IMR-90 (cell line): ENCODE measurements at regions of chr16 and their contacts with region 1.

Region 1: DNA sequence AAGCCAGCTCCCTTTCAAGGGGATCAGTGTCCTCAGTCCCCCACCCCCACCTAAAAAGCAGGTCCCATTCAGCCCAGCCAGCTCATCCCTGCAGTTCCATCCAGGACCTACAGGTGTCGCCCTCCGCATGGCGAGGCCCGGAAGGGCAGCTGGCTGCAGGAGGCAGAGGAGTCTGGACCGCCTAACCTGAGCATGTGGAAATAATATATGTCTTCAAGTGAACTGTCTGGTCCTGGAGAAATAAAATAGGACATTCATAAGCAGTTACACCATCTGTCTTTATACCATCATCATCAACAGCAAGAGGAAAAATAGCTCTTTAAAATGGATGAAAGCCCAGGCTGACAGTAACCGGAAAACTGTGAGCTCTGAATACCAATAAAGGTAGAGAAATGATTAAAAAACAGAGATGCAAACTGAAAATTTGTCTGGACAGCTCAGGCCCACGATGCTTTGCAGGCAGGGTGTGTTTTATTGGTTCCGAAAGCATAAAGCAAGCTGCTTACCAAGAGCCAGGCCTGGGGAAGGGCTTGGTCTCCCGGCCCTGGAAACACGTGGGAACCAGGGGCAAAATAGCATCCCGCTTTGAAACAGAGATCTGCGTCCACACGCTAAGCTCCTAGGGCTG is 215.2 kb downstream of the ZFHX3 start:
- DNase-seq: peak; percentile 70
- ATAC-seq: peak; percentile 97
- H3K4me3 ChIP-seq: no peak overlapping the region
- H3K27ac ChIP-seq: no peak overlapping the region
- H3K4me1 ChIP-seq: peaks cover 4% of the 10 kb centered on the region
- H3K27me3 ChIP-seq: no peaks in the 10 kb centered on the region
- CTCF ChIP-seq: peak; percentile 96
- POLR2A ChIP-seq: no peak
- RAD21 ChIP-seq: peak; percentile 96

Region 2: GRCh38 chr16:72612256-72612655 is 220.5 kb before region 1 on chr16:
- CTCF ChIA-PET with region 1: no interaction called
- POLR2A ChIA-PET with region 1: no interaction called
- dilution Hi-C with region 1: no loop called
- in situ Hi-C with region 1: no loop called
- intact Hi-C with region 1: no loop called
- DNase-seq: peak; percentile 21
- ATAC-seq: peak; percentile 61
- H3K4me3 ChIP-seq: no peak overlapping the region
- H3K27ac ChIP-seq: no peak overlapping the region
- H3K4me1 ChIP-seq: no peaks in the 10 kb centered on the region
- H3K27me3 ChIP-seq: no peaks in the 10 kb centered on the region
- CTCF ChIP-seq: no peak
- POLR2A ChIP-seq: no peak
- RAD21 ChIP-seq: no peak

Region 3: DNA sequence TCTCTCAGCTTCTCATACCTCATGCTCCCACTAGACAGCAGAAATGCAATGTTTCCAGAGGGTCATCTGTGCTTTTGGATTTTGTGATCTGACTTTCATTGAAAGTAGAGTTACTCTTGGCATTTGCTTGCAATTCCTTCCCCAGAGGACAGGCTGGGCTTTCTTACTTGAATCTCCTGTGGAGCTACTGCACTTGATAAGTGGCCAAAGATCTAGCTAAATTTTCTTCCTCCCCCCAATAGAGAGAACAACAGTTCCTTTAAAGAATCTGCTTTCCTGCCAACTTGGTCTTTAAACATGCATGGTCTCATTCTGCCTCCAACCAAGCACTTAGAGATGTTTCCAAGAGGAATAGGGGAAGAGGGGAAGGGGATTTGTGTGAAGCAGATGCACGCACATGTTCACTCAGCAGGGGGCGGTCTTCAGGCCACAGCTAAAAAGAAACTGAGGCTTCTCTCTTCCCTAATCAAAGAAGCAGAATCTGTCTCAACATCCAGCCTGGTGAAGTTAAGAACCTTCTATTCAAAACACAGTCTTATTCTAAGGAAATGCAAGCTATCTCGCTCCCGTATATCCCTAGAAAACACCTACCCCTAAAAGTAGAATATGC is 14.4 kb before region 1 on chr16:
- CTCF ChIA-PET with region 1: interaction called, 12 read pairs
- POLR2A ChIA-PET with region 1: no interaction called
- dilution Hi-C with region 1: no loop called
- in situ Hi-C with region 1: no loop called
- intact Hi-C with region 1: no loop called
- DNase-seq: no peak
- ATAC-seq: no peak
- H3K4me3 ChIP-seq: no peak overlapping the region
- H3K27ac ChIP-seq: no peak overlapping the region
- H3K4me1 ChIP-seq: peaks cover 10% of the 10 kb centered on the region
- H3K27me3 ChIP-seq: no peaks in the 10 kb centered on the region
- CTCF ChIP-seq: 0 out of 2 replicates have a peak, but pooled peaks have one; percentile 11
- POLR2A ChIP-seq: no peak
- RAD21 ChIP-seq: no peak

Region 4: DNA sequence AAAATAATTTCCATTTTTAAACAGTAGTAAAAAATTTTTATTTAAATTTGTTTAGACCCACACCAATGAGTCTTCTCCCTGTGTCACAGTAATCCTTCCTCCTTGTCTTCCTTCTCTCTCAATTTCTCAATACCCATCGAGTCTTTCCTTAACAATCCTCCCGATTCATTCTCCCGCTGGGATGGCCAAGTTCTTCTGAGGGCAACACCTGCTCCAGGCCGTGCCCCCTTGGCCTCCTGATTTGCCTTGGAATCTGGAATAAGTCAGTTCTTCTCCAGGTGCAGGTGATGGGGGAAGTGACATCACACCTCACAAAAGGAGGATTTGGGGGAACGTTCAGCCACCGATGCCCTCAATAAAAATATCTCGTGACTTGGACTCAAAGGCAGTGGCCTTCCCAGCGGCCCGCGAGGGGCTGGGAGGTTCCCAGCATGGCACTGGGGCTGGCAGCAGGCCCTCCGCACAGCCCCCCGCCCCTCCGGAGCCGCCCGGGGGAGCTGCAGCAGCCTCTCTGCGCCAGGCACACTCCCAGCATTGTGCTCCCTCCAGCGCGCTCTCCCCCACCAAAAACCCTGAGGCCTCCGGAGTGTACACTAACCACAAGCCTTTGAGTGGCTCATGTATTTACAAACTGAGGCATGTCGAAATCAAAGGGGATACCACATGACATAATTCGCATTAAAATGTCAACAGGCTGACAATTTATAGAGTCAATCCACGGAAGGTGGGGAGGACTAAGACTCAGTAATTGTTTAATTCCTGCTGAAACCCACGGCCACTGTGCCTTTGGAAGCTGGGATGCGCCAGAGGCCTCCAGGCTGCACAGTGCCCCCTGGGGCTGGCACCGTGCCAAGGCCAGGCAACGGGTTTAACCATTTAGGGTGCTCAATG is 94.7 kb after region 1 on chr16:
- CTCF ChIA-PET with region 1: interaction called, 6 read pairs
- POLR2A ChIA-PET with region 1: no interaction called
- dilution Hi-C with region 1: no loop called
- in situ Hi-C with region 1: no loop called
- intact Hi-C with region 1: loop called (anchors 5 kb)
- DNase-seq: peak; percentile 97
- ATAC-seq: peak; percentile 87
- H3K4me3 ChIP-seq: no peak overlapping the region
- H3K27ac ChIP-seq: no peak overlapping the region
- H3K4me1 ChIP-seq: peaks cover 14% of the 10 kb centered on the region
- H3K27me3 ChIP-seq: peaks cover 4% of the 10 kb centered on the region; the same call in 1 of the 2 replicates
- CTCF ChIP-seq: no peak; the same call in 1 of the 2 replicates
- POLR2A ChIP-seq: no peak
- RAD21 ChIP-seq: peak; percentile 28; the same call in 1 of the 2 replicates

Region 5: GRCh38 chr16:73172241-73172972 is 339.7 kb after region 1 on chr16:
- CTCF ChIA-PET with region 1: interaction called, 4 read pairs
- POLR2A ChIA-PET with region 1: no interaction called
- dilution Hi-C with region 1: no loop called
- in situ Hi-C with region 1: no loop called
- intact Hi-C with region 1: loop called (anchors 2 kb)
- DNase-seq: peak; percentile 91
- ATAC-seq: peak; percentile 78
- H3K4me3 ChIP-seq: no peak overlapping the region
- H3K27ac ChIP-seq: peak overlapping the region; percentile 68; the same call in 1 of the 2 replicates
- H3K4me1 ChIP-seq: peaks cover 16% of the 10 kb centered on the region
- H3K27me3 ChIP-seq: 0 out of 2 replicates have a peak, but pooled peaks cover 3% of the 10 kb centered on the region
- CTCF ChIP-seq: peak; percentile 36
- POLR2A ChIP-seq: no peak
- RAD21 ChIP-seq: peak; percentile 36

Region 6: DNA sequence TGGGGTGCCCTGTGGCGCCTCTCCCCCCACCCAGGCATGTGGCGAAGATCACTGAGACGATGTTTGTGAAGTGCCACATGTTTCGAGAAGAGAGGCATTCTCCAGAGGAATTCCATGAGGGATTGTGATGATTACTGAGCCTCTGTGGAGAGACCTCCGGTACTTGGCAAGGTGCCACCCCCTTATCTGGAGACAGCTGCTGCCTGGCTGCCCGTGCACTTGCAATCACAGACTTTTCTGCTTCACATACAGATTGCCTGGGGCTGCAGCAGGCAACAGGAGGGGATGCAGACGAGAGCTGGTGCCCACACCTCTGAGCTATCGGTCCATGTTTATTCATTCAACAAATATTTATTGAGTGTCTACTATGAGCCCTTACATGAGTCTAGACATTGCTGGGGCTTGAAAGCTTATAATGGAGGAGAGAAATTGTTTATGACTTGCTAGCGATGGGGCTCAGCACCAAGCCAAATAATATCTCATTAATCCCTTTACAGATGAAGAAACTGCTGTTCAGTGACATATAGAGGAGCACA is 532.3 kb after region 1 on chr16:
- CTCF ChIA-PET with region 1: no interaction called
- POLR2A ChIA-PET with region 1: no interaction called
- dilution Hi-C with region 1: no loop called
- in situ Hi-C with region 1: no loop called
- intact Hi-C with region 1: no loop called
- DNase-seq: peak; percentile 12
- ATAC-seq: no peak
- H3K4me3 ChIP-seq: no peak overlapping the region
- H3K27ac ChIP-seq: no peak overlapping the region
- H3K4me1 ChIP-seq: no peaks in the 10 kb centered on the region; the same call in 1 of the 2 replicates
- H3K27me3 ChIP-seq: no peaks in the 10 kb centered on the region; the same call in 1 of the 2 replicates
- CTCF ChIP-seq: no peak
- POLR2A ChIP-seq: no peak
- RAD21 ChIP-seq: no peak

Region 7: GRCh38 chr16:73504591-73505575 is 672.1 kb after region 1 on chr16:
- CTCF ChIA-PET with region 1: no interaction called
- POLR2A ChIA-PET with region 1: no interaction called
- dilution Hi-C with region 1: no loop called
- in situ Hi-C with region 1: no loop called
- intact Hi-C with region 1: no loop called
- DNase-seq: no peak
- ATAC-seq: no peak
- H3K4me3 ChIP-seq: no peak overlapping the region
- H3K27ac ChIP-seq: no peak overlapping the region
- H3K4me1 ChIP-seq: no peaks in the 10 kb centered on the region
- H3K27me3 ChIP-seq: no peaks in the 10 kb centered on the region
- CTCF ChIP-seq: no peak
- POLR2A ChIP-seq: no peak
- RAD21 ChIP-seq: no peak

Region 8: DNA sequence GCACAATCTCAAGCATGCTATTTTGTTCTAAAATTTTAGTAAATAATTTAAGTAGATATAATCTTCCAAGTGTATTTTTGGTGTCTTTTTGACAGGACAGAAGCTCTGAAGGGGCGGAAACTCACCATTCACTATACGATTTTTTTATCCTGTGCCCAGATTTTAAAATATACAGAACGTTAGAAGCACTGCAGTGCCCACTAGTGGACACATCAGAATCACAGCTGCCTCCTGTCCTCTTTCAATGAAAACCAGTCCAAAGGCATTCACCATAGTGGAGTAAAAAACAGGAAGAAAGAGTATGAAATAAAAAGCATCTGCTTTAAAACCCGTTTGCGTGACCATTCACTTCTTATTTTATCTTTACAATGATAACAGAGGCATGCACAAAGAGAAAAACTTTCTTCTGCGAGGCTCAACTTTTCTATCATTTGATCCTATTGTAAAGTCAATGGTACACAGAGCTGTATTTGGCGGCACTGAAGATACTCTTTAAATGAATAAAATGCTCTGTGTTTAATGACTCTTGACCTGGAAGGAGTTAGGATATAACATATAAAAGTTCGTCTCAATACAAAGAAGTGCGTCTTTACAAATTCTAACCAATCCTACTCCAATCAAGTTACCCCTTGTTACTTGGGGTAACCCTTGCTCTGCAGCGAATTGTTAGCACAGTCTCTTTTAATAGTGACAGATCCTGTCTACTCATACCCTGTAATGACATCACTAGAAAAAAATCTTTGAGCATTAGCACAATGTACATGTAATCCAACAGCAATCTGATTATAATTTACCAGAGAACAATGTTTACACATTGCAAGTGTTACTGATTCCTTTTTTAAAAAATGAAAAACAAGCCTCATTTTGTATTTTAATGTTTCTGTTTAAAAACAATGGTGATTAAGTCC is 1124.1 kb after region 1 on chr16:
- CTCF ChIA-PET with region 1: no interaction called
- POLR2A ChIA-PET with region 1: no interaction called
- dilution Hi-C with region 1: no loop called
- in situ Hi-C with region 1: no loop called
- intact Hi-C with region 1: loop called (anchors 10 kb)
- DNase-seq: peak; percentile 64
- ATAC-seq: peak; percentile 92
- H3K4me3 ChIP-seq: no peak overlapping the region
- H3K27ac ChIP-seq: no peak overlapping the region
- H3K4me1 ChIP-seq: no peaks in the 10 kb centered on the region
- H3K27me3 ChIP-seq: no peaks in the 10 kb centered on the region
- CTCF ChIP-seq: peak; percentile 74
- POLR2A ChIP-seq: no peak
- RAD21 ChIP-seq: peak; percentile 73